Psoas muscle (tissue), 8 donors: ENCODE measurements at regions of chr7 and their contacts with region 1.

Region 1: GRCh38 chr7:2209146-2209960 is 23.4 kb downstream of the MAD1L1 start:
- DNase-seq: peak; percentile 75 to 85
- ATAC-seq: peak; percentile 88 to 96 (median 91)
- H3K4me3 ChIP-seq: no peak overlapping the region
- H3K27ac ChIP-seq: no peak overlapping the region
- H3K4me1 ChIP-seq: no peaks in the 10 kb centered on the region
- H3K27me3 ChIP-seq: no peaks in the 10 kb centered on the region
- CTCF ChIP-seq: peak; percentile 78

Region 2: GRCh38 chr7:1432411-1433082 is 776.8 kb before region 1 on chr7:
- intact Hi-C with region 1: no loop called
- DNase-seq: peak; percentile 68 to 85
- ATAC-seq: peak; percentile 66 to 84 (median 74)
- H3K4me3 ChIP-seq: no peak overlapping the region
- H3K27ac ChIP-seq: no peak overlapping the region
- H3K4me1 ChIP-seq: no peaks in the 10 kb centered on the region
- H3K27me3 ChIP-seq: peaks cover 0 to 39% (median 5%) of the 10 kb centered on the region in 3 donors
- CTCF ChIP-seq: peak; percentile 98

Region 3: GRCh38 chr7:1664711-1665548 is 544.4 kb before region 1 on chr7:
- intact Hi-C with region 1: loop called in 1 of 2 experiments (anchors 10 kb)
- DNase-seq: peak; percentile 66 to 80
- ATAC-seq: peak; percentile 59 to 86 (median 65)
- H3K4me3 ChIP-seq: peak overlapping the region; percentile 74
- H3K27ac ChIP-seq: peak overlapping the region; percentile 9
- H3K4me1 ChIP-seq: peaks cover 12% of the 10 kb centered on the region
- H3K27me3 ChIP-seq: peaks cover 0 to 79% (median 27%) of the 10 kb centered on the region in 3 donors
- CTCF ChIP-seq: peak; percentile 67

Region 4: GRCh38 chr7:1812509-1813393 is 396.6 kb before region 1 on chr7:
- intact Hi-C with region 1: loop called (anchors 10 kb)
- DNase-seq: no peak
- ATAC-seq: peak in 3 of 4 donors; percentile 53 to 76 (median 62)
- H3K4me3 ChIP-seq: no peak overlapping the region
- H3K27ac ChIP-seq: no peak overlapping the region
- H3K4me1 ChIP-seq: peaks cover 4% of the 10 kb centered on the region
- H3K27me3 ChIP-seq: peaks cover 0 to 3% (median 0%) of the 10 kb centered on the region in 3 donors
- CTCF ChIP-seq: peak; percentile 41

Region 5: DNA sequence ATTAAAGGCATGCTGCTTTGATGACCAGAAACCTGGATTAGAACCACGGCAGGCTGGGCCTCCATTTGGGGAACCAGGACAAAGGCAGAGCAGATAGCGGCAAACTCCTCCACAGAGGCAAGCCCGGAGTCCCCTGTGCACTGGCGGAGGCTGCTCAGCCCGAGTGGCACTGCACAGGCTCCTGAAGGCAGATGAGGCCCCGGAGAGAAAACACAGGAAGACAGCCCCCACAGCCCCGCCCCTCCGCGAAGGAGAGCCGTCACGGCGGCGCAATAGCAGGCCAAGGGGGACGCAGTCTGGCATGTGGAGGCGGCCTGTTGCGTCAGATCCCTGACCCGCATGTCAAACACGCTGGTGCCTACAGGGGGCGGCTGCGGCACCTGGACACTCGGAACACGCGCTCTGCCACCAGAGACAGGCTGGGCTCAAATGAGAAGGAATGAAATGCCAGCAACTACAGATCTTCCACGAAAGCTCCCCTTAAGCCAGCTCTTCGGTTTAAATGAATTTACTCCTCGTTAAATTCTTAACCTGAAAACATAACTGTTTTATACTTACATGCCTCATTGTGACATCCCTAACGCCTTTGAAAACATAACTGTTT is 105.1 kb before region 1 on chr7:
- intact Hi-C with region 1: loop called in 1 of 2 experiments (anchors 2 kb)
- DNase-seq: peak; percentile 90 to 96
- ATAC-seq: peak; percentile 82 to 96 (median 90)
- H3K4me3 ChIP-seq: peak overlapping the region; percentile 44
- H3K27ac ChIP-seq: peak overlapping the region; percentile 3
- H3K4me1 ChIP-seq: peaks cover 31% of the 10 kb centered on the region
- H3K27me3 ChIP-seq: no peaks in the 10 kb centered on the region
- CTCF ChIP-seq: peak; percentile 79